CD14-positive monocyte (primary cell): ENCODE measurements at regions of chrX and their contacts with region 1.

Region 1: DNA sequence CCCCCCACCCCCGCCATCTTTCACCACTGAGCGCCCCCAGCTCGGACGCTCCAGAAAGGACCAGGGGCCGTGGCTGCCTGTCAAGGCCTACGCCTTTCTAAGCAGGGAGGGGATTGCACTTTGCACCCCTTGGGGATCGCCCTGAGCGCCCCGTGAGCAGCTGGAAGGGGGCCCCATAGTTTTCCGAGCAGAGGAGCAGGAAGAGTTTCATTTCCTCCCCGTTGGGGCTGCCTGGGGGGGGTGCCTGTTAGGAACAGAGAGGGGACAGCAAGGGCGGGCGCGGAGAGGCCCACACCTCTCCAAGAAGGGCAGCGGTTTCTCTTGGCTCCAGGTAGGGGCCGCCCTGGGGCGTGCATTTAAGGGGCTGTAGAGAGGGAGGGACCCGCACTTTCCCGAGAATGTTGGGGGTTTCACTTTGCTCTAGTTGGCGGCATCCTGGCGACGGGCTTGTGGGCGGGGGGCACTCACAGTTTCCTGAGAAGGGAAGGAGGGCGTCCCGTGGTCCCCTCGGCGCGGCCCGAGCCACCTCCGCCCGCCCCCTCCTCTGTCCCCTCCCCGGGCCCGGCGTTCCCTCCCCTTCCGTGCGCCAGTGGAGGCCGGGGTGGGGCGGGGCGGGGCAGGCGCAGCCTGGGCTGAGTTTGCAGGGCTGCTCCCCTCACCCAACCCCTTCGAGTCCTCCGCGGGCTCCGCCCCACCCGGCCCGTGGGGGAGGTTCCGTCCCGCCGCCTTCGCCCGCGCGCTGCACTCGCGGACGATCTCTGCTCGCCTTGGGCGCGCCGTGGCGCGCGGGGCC is 82.3 kb upstream of the CD99 start:
- DNase-seq: peak; percentile 75 to 83 (median 75)
- H3K4me3 ChIP-seq: peak overlapping the region; percentile 88 to 90 (median 89)
- H3K4me3 Mint-ChIP-seq: peak overlapping the region; percentile 96
- H3K27ac ChIP-seq: peak overlapping the region; percentile 84 to 93
- H3K27ac Mint-ChIP-seq: peak overlapping the region; percentile 87 to 96 (median 93)
- H3K4me1 ChIP-seq: peaks cover 28 to 33% of the 10 kb centered on the region in 2 donors
- H3K4me1 Mint-ChIP-seq: peaks cover 52% of the 10 kb centered on the region
- H3K27me3 ChIP-seq: no peaks in the 10 kb centered on the region
- H3K27me3 Mint-ChIP-seq: peaks cover 0 to 3% (median 0%) of the 10 kb centered on the region in 3 donors
- CTCF ChIP-seq: no peak

Region 2: GRCh38 chrX:2434270-2435163 is 174.3 kb before region 1 on chrX:
- intact Hi-C with region 1: no loop called
- DNase-seq: no peak
- H3K4me3 ChIP-seq: no peak overlapping the region
- H3K4me3 Mint-ChIP-seq: no peak overlapping the region
- H3K27ac ChIP-seq: no peak overlapping the region
- H3K27ac Mint-ChIP-seq: peak overlapping the region in 2 of 7 donors; percentile 0 to 1
- H3K4me1 ChIP-seq: peaks cover 11 to 12% of the 10 kb centered on the region in 2 donors
- H3K4me1 Mint-ChIP-seq: peaks cover 15% of the 10 kb centered on the region
- H3K27me3 ChIP-seq: no peaks in the 10 kb centered on the region
- H3K27me3 Mint-ChIP-seq: peaks cover 0 to 2% (median 2%) of the 10 kb centered on the region in 3 donors
- CTCF ChIP-seq: no peak

Region 3: DNA sequence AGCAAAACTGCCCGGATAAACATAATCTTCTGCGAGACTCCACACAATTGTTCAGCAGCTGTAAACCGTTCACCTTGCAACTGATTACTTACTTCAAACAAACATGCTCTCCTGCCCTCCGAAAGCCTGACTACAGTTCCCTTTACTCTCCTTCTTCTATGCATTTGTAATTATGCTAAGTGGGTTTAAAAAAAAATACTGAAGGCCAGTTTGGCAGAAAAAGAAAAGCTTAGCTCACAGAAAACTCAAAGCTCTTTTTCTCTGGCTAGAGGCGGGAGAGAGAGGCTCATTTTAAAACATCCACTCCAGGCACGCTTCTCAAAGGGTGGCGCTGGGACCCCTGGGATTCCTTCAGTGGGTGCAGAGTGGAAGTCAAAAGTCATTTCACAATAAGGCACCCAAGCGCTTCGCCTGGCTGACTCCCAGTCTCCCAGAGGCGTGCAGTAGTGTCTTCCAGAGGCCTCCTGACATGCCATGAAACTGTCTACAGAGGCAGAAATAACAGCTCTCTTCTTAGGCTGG is 110.0 kb before region 1 on chrX:
- intact Hi-C with region 1: loop called in 1 of 2 experiments (anchors 10 kb)
- DNase-seq: peak in 1 of 3 donors; percentile 23
- H3K4me3 ChIP-seq: peak overlapping the region in 1 of 3 experiments; percentile 88
- H3K4me3 Mint-ChIP-seq: peak overlapping the region; percentile 77 to 85
- H3K27ac ChIP-seq: peak overlapping the region; percentile 64 to 93
- H3K27ac Mint-ChIP-seq: peak overlapping the region; percentile 46 to 93 (median 86)
- H3K4me1 ChIP-seq: peaks cover 31 to 35% of the 10 kb centered on the region in 2 donors
- H3K4me1 Mint-ChIP-seq: peaks cover 34% of the 10 kb centered on the region
- H3K27me3 ChIP-seq: no peaks in the 10 kb centered on the region
- H3K27me3 Mint-ChIP-seq: peaks cover 0 to 7% (median 1%) of the 10 kb centered on the region in 3 donors
- CTCF ChIP-seq: no peak

Region 4: DNA sequence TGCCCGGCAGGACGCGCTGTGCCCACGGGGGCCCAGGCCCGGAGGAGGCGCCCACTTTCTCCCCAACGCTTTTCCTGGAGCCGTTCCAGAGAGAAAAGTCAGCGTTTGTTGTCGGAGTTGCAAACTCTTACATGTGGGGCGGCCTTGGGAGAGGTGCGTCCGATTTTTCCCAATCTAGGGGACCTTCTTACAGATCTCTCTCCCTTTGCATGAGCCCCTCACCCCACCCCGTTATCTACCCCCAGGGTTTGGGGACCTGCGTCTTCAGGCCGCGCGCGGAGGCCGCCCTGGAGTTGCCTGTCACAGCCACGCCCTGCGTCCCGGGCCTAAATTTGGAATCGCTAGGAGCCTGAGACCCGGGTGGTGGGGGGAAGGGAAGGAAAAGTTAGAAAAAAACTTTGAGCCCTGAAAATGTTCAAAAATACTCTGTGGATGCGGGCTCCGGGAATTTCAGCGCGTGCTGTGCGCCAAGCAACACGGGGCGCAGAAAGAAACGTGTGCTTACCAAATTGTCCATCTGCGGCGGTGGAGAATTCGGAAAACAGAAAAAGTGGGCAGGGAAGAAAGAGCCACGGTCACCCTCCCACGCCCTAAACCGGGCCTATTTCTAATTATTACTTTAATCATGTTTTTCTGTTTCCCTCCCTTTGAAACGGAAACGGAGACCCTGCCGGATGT is 82.8 kb after region 1 on chrX:
- intact Hi-C with region 1: loop called in 1 of 2 experiments (anchors 2 kb)
- DNase-seq: peak in 1 of 3 donors; percentile 23
- H3K4me3 ChIP-seq: peak overlapping the region; percentile 73 to 90 (median 85)
- H3K4me3 Mint-ChIP-seq: peak overlapping the region; percentile 98
- H3K27ac ChIP-seq: peak overlapping the region; percentile 64 to 83
- H3K27ac Mint-ChIP-seq: peak overlapping the region; percentile 78 to 97 (median 91)
- H3K4me1 ChIP-seq: peaks cover 44 to 52% of the 10 kb centered on the region in 2 donors
- H3K4me1 Mint-ChIP-seq: peaks cover 46% of the 10 kb centered on the region
- H3K27me3 ChIP-seq: no peaks in the 10 kb centered on the region
- H3K27me3 Mint-ChIP-seq: peaks cover 8 to 22% (median 9%) of the 10 kb centered on the region in 3 donors
- CTCF ChIP-seq: no peak